ENCODE measurements at regions of chr13 and their contacts with region 1.

Region 1: DNA sequence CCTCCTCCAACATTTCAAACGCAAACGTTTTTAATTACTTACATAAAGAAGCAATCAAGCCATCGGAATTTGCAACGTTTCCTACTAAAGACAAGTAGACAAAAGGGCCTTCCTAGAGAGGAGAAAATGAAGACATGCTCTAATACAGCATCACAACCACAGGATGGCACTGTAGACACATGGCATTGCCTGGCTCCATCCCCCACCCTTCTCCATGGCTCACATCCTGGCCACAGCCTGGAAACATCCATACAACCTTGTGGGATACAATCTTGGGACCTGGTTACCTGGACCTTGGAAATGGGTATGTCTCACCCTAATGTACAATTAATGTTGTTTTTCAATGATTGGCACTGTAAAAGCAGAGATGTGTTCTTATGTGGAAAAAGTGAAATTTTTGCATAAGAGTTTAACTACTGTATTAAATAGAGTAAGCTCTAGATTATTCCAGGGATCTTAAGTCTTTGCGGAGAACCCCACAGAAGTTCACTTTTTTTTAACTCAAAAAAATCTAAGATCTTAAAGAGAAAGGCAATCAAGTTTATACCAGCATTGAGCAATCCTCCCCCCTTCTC is 21.5 kb downstream of the EBPL start:
- ATAC-seq: peak; percentile 83 to 100 (median 99)
- H3K4me3 ChIP-seq: no peak overlapping the region
- H3K27ac ChIP-seq: no peak overlapping the region
- H3K4me1 ChIP-seq: peaks cover 0 to 11% of the 10 kb centered on the region in 2 donors

Region 2: DNA sequence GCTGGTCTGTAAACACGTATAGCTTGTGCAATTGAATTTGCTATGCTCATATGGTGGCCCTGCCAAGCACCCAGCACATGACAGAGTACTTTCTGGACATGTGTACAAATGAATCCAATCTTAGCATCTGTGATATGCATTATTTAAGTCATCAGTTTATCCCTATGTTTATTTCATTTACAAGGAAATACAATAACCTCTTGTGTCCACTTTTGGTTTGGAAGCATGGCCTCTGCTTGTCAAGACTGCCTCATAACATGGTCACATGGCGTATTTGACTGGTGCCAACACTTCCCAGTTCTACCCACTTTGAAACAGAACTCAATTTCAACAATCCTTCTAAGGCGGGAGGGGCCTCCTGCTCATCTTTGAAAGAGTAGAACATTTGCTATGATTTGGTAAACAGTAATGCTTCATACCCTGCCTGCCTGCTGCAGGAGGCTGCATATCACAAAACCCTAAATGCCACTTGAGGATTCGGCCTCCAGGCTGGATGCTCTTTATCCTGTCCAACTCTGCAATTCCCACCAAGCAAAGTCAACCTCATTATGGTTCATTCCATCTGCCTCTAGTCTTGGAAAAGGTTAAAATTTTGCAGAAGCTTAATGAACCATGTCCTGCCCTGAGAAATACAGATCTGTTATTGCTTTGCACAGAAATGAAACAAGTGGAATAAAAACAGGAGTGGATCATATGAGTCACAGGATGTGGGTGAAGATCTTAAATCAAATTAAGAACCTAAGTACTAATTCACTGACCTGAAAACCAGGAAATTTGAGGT is 864.8 kb before region 1 on chr13:
- in situ Hi-C with region 1: no loop called
- ATAC-seq: no peak
- H3K4me3 ChIP-seq: no peak overlapping the region
- H3K27ac ChIP-seq: no peak overlapping the region
- H3K4me1 ChIP-seq: no peaks in the 10 kb centered on the region

Region 3: DNA sequence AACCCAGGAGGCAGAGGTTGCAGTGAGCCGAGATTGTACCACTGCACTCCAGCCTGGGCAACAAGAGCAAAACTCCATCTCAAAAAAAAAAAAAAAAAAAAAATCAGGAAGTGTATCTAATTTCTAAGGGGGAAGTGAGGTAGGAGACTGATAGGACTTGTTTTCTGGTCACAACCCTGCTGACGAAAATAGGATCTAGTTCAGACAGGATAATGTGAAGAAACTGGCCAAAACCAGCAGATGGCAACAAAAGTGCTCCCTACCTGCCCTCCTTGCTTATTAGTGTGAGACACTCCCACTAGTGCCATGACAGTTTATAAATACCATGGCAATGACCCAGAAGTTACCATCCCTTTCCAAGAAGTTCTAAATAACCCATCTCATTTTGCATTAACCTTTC is 158.6 kb after region 1 on chr13:
- in situ Hi-C with region 1: loop called in 3 of 9 experiments (anchors 25 kb)
- ATAC-seq: no peak
- H3K4me3 ChIP-seq: no peak overlapping the region
- H3K27ac ChIP-seq: no peak overlapping the region
- H3K4me1 ChIP-seq: no peaks in the 10 kb centered on the region

Region 4: DNA sequence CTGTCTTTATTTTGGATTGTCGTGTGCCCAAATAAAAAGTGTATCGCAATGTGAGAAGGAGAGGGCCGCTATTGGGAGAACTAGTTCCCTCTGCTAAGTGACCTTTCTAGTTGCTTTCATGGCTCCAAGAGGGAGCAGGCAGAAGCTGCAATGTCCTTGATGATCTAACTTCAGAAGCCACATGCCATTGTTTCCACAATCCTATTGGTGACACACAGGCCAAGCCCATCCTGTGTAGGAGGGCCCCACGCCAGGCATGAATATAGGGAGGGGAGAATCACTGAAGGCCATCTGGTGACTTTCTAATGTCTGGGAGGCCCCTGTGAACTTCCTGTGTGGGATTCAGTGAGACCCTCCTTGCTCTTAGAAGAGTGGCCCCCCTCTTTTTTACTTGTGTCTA is 170.4 kb after region 1 on chr13:
- in situ Hi-C with region 1: loop called in 4 of 9 experiments (anchors 10 to 25 kb)
- ATAC-seq: peak in 7 of 8 experiments; percentile 18 to 55 (median 44)
- H3K4me3 ChIP-seq: no peak overlapping the region
- H3K27ac ChIP-seq: no peak overlapping the region
- H3K4me1 ChIP-seq: peaks cover 6 to 21% of the 10 kb centered on the region in 2 donors

Measured in motor neuron (in vitro differentiated cells).